K562 (cell line): ENCODE measurements at regions of chr20 and their contacts with region 1.

Region 1: DNA sequence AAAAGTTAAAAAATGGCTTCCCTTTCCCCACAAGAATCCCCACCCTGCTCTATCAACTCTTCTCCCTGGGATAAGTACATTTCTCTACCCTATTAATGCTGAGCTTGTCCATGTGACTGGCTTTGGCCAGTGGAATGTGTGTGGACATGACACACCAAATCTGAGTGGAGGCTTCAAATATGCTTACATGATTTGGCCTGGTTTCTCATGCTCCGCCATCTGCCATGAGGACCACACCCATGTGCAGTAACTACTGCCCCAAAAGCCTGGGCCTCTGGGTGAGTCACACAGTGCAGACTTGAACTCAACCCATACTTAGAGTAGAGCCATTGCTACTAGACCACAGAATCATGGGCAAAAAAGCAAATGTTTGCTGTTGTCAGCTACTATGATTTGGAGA is 65.4 kb downstream of the PRND start:
- DNase-seq: no peak
- ATAC-seq: no peak
- H3K4me3 ChIP-seq: no peak overlapping the region
- H3K27ac ChIP-seq: no peak overlapping the region
- H3K4me1 ChIP-seq: no peaks in the 10 kb centered on the region
- H3K27me3 ChIP-seq: peaks cover 6 to 69% of the 10 kb centered on the region in 2 experiments; a peak in 4 of 5 replicates
- CTCF ChIP-seq: no peak
- EP300 ChIP-seq: no peak
- POLR2A ChIP-seq: no peak
- RAD21 ChIP-seq: no peak

Region 2: DNA sequence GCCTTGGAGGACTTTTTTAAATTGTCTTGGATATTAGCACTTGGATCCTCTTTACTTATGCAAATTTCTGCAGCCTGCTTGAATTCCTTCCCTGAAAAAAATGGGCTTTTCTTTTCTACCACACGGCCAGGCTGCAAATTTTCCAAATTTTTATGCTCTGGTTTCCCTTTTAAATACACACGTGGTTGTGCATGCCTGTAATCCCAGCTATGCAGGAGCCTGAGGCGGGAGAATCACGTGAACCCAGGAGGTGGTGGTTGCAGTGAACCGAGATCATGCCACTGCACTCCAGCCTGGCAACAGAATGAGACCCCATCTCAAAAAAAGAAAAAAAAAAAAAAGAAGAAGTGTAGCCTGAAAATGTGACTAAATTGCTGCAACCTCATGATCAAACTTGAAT is 141.4 kb before region 1 on chr20:
- CTCF ChIA-PET with region 1: no interaction called
- POLR2A ChIA-PET with region 1: no interaction called
- in situ Hi-C with region 1: no loop called
- intact Hi-C with region 1: no loop called
- DNase-seq: no peak
- ATAC-seq: no peak
- H3K4me3 ChIP-seq: no peak overlapping the region
- H3K27ac ChIP-seq: no peak overlapping the region
- H3K4me1 ChIP-seq: no peaks in the 10 kb centered on the region
- H3K27me3 ChIP-seq: no peaks in the 10 kb centered on the region
- CTCF ChIP-seq: no peak
- EP300 ChIP-seq: no peak
- POLR2A ChIP-seq: no peak
- RAD21 ChIP-seq: no peak

Region 3: GRCh38 chr20:4774207-4774606 is 12.9 kb before region 1 on chr20:
- CTCF ChIA-PET with region 1: no interaction called
- POLR2A ChIA-PET with region 1: no interaction called
- in situ Hi-C with region 1: no loop called
- intact Hi-C with region 1: loop called (anchors 1 kb)
- DNase-seq: no peak
- ATAC-seq: no peak
- H3K4me3 ChIP-seq: no peak overlapping the region
- H3K27ac ChIP-seq: no peak overlapping the region
- H3K4me1 ChIP-seq: peaks cover 0 to 4% of the 10 kb centered on the region in 2 experiments; a peak in 2 of 5 replicates
- H3K27me3 ChIP-seq: peaks cover 0 to 9% of the 10 kb centered on the region in 2 experiments; a peak in 2 of 5 replicates
- CTCF ChIP-seq: no peak
- EP300 ChIP-seq: no peak
- POLR2A ChIP-seq: no peak
- RAD21 ChIP-seq: no peak

Region 4: DNA sequence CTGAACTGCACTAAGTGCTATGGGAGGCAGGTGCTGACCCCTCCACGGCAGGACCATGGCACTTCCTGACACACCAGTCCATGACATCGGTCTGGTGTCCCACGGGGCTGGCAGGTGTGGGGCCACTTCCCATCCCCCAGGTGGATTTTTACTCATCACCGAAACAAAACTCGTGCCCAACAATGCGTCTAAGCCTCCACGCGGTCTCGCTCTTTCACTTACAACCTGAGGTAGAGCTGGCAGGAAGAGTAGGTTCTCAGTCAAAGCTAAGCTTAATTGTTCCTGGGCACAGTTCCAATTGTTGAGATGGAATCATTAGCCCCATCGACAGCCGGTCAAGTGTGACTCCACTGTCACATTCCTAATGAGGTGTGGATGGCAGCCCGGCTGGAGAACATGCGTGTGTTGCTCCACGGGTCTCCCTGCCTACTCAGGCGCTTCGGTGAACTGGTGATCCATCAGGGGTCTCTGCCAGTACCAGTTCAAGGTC is 88.6 kb after region 1 on chr20:
- CTCF ChIA-PET with region 1: no interaction called
- POLR2A ChIA-PET with region 1: no interaction called
- in situ Hi-C with region 1: no loop called
- intact Hi-C with region 1: no loop called
- DNase-seq: no peak
- ATAC-seq: no peak
- H3K4me3 ChIP-seq: no peak overlapping the region
- H3K27ac ChIP-seq: no peak overlapping the region
- H3K4me1 ChIP-seq: no peaks in the 10 kb centered on the region
- H3K27me3 ChIP-seq: no peaks in the 10 kb centered on the region
- CTCF ChIP-seq: no peak
- EP300 ChIP-seq: no peak
- POLR2A ChIP-seq: no peak
- RAD21 ChIP-seq: no peak

Region 5: DNA sequence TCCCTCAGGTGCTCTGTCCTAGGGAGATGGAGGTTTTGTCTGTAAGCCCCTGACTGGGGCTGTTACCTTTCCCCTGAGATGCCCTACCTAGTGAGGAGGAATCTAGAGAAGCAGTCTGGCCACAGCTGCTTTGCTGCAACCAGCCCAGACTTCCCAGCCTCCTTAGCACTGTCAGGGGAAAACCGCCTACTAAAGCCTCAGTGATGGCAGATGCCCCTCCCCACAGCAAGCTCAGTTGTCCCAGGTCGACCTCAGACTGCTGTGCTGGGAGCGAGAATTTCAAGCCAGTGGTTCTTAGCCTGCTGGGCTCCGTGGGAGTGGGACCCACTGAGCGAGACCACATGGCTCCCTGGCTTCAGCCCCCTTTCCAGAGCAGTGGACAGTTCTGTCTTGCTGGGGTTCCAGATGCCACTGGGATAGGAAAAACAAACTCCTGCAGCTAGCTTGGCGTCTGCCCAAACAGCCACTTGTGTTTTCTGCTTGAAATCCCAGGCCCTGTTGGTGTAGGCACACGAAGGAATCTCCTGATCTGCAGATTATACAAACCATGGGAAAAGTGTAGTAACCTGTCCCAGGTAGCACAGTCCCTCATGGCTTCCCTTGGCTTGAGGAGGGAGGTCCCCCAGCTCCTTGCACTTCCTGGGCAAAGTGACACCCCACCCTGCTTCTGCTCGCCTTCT is 676.1 kb after region 1 on chr20:
- CTCF ChIA-PET with region 1: no interaction called
- POLR2A ChIA-PET with region 1: no interaction called
- in situ Hi-C with region 1: no loop called
- intact Hi-C with region 1: no loop called
- DNase-seq: no peak
- ATAC-seq: no peak
- H3K4me3 ChIP-seq: no peak overlapping the region
- H3K27ac ChIP-seq: no peak overlapping the region
- H3K4me1 ChIP-seq: peaks cover 0 to 4% of the 10 kb centered on the region in 2 experiments; a peak in 1 of 5 replicates
- H3K27me3 ChIP-seq: peaks cover 0 to 9% of the 10 kb centered on the region in 2 experiments; a peak in 2 of 5 replicates
- CTCF ChIP-seq: no peak
- EP300 ChIP-seq: no peak
- POLR2A ChIP-seq: no peak
- RAD21 ChIP-seq: no peak